ENCODE measurements at regions of chr14 and their contacts with region 1.

Region 1: DNA sequence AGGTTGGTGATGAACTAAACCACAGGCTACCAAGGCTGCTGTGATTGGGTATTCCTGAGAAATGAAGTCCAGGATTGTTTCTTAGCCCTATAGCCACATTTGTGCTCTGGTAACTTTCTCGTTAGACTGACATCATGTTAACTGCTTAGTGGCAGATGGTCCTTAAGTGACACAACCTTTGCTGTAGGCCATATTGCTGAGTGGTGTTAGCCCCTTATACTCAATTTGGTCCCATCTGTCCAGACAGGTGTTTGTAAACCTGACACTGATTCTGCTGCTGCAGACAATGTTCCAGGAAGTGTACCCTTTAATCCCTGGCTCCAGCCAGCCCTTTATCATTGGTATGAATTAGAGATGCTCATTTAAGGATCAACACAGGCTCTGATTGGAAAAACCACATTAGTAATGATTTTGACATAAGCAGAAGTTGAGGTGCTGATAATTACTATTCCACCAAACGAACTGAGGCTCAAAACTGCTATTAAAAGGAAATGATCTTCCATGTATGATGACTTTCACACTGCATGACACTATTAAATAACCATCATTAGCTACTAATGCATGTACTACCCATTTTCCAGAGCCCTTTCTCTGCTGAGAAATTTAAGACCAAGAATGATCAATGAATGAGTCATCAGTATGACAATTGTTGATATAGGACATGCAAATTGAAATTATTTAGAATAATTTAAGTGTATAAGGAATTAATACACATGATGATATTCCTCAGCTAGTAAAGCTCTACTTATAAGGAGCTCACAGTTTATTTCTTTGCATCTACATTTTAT is 3.6 kb upstream of the SSTR1 start:
- DNase-seq: no peak
- H3K27ac ChIP-seq: no peak overlapping the region
- CTCF ChIP-seq: no peak

Region 2: DNA sequence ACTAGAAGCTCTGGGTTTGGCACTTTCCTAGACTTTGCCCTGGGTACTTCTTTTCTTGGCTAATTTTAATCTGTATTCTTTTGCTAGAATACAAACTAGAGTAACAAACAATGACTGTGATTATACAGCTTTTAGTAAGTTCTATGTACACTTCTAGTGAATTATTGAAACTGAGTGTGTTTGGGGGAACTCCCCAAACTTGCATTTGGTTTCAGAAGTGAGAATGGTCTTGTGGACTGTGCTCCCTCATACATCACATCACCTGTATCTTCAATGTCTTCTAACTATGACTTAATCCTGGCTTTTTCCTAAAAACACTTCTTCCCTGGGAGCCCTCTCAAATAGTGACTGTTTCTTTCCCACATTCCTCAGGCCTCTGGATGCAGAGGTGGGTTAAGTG is 20.0 kb before region 1 on chr14:
- CTCF ChIA-PET with region 1: no interaction called
- POLR2A ChIA-PET with region 1: no interaction called
- DNase-seq: no peak
- H3K27ac ChIP-seq: no peak overlapping the region
- CTCF ChIP-seq: no peak

Region 3: DNA sequence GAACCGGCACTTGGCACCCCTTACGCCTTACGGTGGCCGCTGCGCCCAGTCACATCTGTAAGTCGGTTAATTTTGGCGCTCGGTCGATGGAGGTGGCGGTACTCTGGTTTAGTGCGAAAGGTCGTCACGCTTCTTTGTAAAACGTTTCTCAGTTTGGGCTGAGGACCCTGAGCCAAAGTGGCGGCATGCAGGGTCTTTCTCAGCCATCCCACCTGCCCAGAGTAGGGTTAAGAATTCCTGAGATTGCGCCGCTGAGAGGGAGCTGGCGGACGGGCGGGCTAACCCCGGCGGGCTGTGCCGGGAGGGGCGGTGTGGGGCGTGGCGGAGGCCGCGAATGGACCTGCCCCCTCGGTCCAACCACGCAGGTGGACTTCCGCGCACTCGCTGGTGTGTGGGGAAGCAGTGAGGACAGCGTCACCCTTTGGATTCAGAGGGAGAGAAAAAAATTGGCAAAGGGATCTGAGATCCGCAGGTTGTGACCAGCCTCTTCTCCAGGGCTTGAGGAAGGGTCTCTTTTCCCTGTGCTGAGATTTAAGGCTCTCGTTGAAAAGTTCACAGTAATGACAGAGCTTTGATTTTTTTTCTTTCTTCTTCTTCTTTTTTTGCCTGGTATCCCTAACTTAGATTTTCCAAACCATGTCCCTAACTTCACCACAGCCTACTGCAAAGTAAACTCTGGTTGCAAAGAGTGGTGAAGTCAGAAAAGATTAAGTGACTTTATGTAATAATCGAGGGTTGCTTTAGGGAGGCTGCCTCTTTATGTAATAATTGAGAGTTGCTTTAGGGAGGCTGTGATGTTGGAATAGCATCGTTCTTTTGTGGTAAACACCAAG is 1228.7 kb after region 1 on chr14:
- CTCF ChIA-PET with region 1: no interaction called
- POLR2A ChIA-PET with region 1: interaction called, 11 read pairs
- DNase-seq: peak; percentile 84
- H3K27ac ChIP-seq: peak overlapping the region; percentile 96
- CTCF ChIP-seq: peak; percentile 59